Caco-2 (cell line): ENCODE measurements at regions of chr5 and their contacts with region 1.

Region 1: DNA sequence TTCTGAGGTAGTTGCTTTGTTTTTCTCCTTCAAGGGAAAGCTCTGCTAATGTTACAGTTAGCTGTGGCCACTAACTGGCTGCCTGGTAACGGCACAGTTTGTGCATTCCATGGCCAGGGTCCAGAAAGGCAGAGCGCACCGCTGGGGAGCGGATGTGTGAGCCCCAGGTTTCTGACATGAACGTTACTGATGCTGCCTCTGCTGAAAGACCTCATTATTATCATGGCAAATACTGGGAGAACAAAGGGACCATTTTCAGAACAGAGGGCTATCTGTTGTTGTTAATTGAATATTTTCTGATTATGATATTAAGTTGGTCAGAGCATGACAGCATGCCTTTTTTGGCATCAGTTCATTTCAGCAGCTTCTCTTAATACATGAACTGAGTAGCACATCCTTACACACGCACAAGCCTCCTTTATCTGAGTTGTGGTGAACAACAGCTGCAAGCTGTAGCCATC is 134.1 kb downstream of the NUDT12 start:
- DNase-seq: no peak
- H3K4me3 ChIP-seq: no peak overlapping the region
- H3K4me3 Mint-ChIP-seq: no peak overlapping the region
- H3K27ac Mint-ChIP-seq: no peak overlapping the region
- H3K4me1 ChIP-seq: 0 out of 2 replicates have a peak, but pooled peaks cover 3% of the 10 kb centered on the region
- H3K4me1 Mint-ChIP-seq: no peaks in the 10 kb centered on the region
- H3K27me3 ChIP-seq: no peaks in the 10 kb centered on the region
- H3K27me3 Mint-ChIP-seq: no peaks in the 10 kb centered on the region
- CTCF ChIP-seq: no peak

Region 2: GRCh38 chr5:101663554-101663953 is 1764.9 kb before region 1 on chr5:
- CTCF ChIA-PET with region 1: no interaction called
- POLR2A ChIA-PET with region 1: no interaction called
- intact Hi-C with region 1: loop called (anchors 5 kb)
- DNase-seq: no peak
- H3K4me3 ChIP-seq: no peak overlapping the region
- H3K4me3 Mint-ChIP-seq: peak overlapping the region; percentile 45
- H3K27ac Mint-ChIP-seq: peak overlapping the region; percentile 84
- H3K4me1 ChIP-seq: peaks cover 53% of the 10 kb centered on the region
- H3K4me1 Mint-ChIP-seq: peaks cover 28% of the 10 kb centered on the region
- H3K27me3 ChIP-seq: no peaks in the 10 kb centered on the region
- H3K27me3 Mint-ChIP-seq: no peaks in the 10 kb centered on the region
- CTCF ChIP-seq: no peak

Region 3: GRCh38 chr5:103461243-103461642 is 32.8 kb after region 1 on chr5:
- CTCF ChIA-PET with region 1: no interaction called
- POLR2A ChIA-PET with region 1: no interaction called
- intact Hi-C with region 1: no loop called
- DNase-seq: no peak
- H3K4me3 ChIP-seq: no peak overlapping the region
- H3K4me3 Mint-ChIP-seq: no peak overlapping the region
- H3K27ac Mint-ChIP-seq: no peak overlapping the region
- H3K4me1 ChIP-seq: no peaks in the 10 kb centered on the region
- H3K4me1 Mint-ChIP-seq: no peaks in the 10 kb centered on the region
- H3K27me3 ChIP-seq: no peaks in the 10 kb centered on the region; the same call in 1 of the 2 replicates
- H3K27me3 Mint-ChIP-seq: peaks cover 6% of the 10 kb centered on the region
- CTCF ChIP-seq: no peak